Naive thymus-derived CD4-positive, alpha-beta T cell (primary cell): ENCODE measurements at regions of chr11 and their contacts with region 1.

Region 1: DNA sequence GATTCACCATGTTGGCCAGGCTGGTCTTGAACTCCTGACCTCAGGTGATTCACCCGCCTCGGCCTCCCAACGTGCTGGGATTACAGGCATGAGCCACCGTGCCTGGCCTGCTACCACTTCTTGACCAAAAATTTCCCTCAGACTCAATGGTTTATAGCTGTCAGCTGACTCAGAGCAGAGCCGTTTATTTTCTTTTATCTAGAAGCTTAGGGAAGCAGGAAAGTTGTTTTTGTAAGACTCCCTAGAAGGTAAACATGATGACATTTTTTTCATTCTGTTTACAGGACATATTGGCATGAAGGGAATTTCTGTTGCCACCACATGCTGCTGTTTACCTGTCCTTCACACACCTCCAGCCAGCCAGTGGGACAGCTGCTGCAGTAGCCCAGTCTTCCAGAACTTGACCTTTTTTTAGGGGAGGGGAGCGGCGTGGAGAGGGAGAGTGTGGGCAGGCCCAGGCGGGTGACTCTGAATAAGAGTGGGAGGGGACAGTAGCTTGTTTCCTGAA is 56.1 kb upstream of the PTPRJ start:
- DNase-seq: no peak
- ATAC-seq: no peak
- H3K4me3 ChIP-seq: no peak overlapping the region
- H3K4me3 Mint-ChIP-seq: peak overlapping the region in 1 of 10 donors; percentile 5
- H3K27ac ChIP-seq: no peak overlapping the region
- H3K27ac Mint-ChIP-seq: peak overlapping the region in 2 of 9 donors; percentile 50 to 74
- H3K4me1 ChIP-seq: peaks cover 23 to 27% of the 10 kb centered on the region in 2 donors
- H3K4me1 Mint-ChIP-seq: peaks cover 28 to 50% (median 42%) of the 10 kb centered on the region in 7 donors
- H3K27me3 ChIP-seq: no peaks in the 10 kb centered on the region
- H3K27me3 Mint-ChIP-seq: peaks cover 0 to 2% (median 0%) of the 10 kb centered on the region in 5 donors

Region 2: DNA sequence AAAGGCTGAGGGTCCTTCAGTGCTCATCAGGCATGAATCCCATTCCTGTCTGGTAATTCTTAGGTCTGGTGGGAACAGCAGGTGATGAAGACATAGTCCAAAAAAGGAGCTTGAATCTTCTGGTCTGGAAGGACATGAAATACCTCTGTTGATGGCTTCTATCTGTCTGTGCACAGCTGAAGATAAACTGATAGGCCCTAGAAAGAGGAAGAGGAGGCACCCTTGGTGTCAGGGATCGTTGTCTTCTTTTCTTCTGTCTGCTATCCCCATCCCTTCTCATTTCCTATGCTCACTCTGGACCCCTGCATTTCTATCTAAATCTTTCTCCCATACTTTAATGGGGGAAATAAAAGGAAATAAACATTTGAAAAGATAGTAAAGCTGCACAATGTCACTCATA is 218.5 kb before region 1 on chr11:
- CTCF ChIA-PET with region 1: no interaction called
- POLR2A ChIA-PET with region 1: no interaction called
- intact Hi-C with region 1: no loop called
- DNase-seq: no peak
- ATAC-seq: no peak
- H3K4me3 ChIP-seq: no peak overlapping the region
- H3K4me3 Mint-ChIP-seq: no peak overlapping the region
- H3K27ac ChIP-seq: no peak overlapping the region
- H3K27ac Mint-ChIP-seq: peak overlapping the region in 1 of 9 donors; percentile 47
- H3K4me1 ChIP-seq: no peaks in the 10 kb centered on the region
- H3K4me1 Mint-ChIP-seq: peaks cover 0 to 4% (median 0%) of the 10 kb centered on the region in 7 donors
- H3K27me3 ChIP-seq: no peaks in the 10 kb centered on the region
- H3K27me3 Mint-ChIP-seq: no peaks in the 10 kb centered on the region

Region 3: GRCh38 chr11:47886096-47886495 is 38.1 kb before region 1 on chr11:
- CTCF ChIA-PET with region 1: no interaction called
- POLR2A ChIA-PET with region 1: interaction called, 4 read pairs
- intact Hi-C with region 1: loop called in 1 of 2 experiments (anchors 5 kb)
- DNase-seq: peak in 5 of 9 donors; percentile 30 to 58 (median 45)
- ATAC-seq: peak; percentile 27
- H3K4me3 ChIP-seq: no peak overlapping the region
- H3K4me3 Mint-ChIP-seq: peak overlapping the region; percentile 43 to 85 (median 73)
- H3K27ac ChIP-seq: peak overlapping the region; percentile 52
- H3K27ac Mint-ChIP-seq: peak overlapping the region; percentile 86 to 95 (median 90)
- H3K4me1 ChIP-seq: peaks cover 6 to 56% of the 10 kb centered on the region in 2 donors
- H3K4me1 Mint-ChIP-seq: peaks cover 16 to 65% (median 58%) of the 10 kb centered on the region in 7 donors
- H3K27me3 ChIP-seq: no peaks in the 10 kb centered on the region
- H3K27me3 Mint-ChIP-seq: peaks cover 0 to 3% (median 0%) of the 10 kb centered on the region in 5 donors